ENCODE measurements at regions of chr12 and their contacts with region 1.

Region 1: DNA sequence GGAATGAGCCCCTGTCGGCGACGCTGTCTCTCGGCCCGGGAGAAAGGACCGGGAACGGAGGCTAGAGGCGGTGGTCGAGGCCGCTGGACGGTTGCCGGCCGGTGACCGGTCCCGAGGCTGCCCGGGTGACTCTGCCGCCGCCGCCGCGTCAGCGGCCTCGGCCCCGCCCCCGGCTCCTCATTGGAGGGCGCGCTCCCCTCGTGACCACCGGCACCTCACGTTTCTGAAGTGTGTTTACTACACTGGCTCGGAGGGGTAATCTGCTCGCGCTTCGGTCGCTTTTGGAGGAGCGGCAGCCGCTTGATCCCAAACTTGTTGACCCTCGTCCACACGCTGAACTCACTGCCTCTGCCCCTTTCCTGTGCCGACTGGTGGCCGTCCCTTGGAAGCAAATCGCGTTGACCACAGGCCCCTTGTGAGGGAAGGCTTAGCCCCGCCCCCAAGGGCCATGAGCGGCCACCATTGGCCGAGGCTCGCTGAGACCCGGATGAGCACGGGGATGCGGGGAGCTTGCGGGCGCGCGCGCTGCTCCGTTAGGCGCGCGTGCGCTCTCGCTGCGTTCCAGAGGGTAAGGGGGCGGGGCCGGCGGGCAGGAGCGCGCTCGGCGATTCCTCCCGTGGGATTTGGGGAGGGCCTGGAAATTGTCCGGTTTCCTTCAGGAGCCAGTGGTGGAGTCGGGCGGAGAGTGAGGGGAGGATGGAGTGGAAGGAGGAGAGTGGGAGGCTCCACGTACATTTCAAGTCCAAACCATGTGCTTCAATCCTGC is at the start of gene CRY1:
- DNase-seq: peak; percentile 86 to 96 (median 91)
- ATAC-seq: peak; percentile 75
- H3K4me3 ChIP-seq: peak within 1 kb of the TSS; percentile 90
- H3K4me3 Mint-ChIP-seq: no peak within 1 kb of the TSS
- H3K27ac ChIP-seq: peak within 1 kb of the TSS; percentile 99
- H3K27ac Mint-ChIP-seq: no peak within 1 kb of the TSS
- H3K4me1 ChIP-seq: peaks cover 31% of the 10 kb centered on the region
- H3K4me1 Mint-ChIP-seq: peaks cover 17% of the 10 kb centered on the region
- H3K27me3 ChIP-seq: no peaks in the 10 kb centered on the region
- H3K27me3 Mint-ChIP-seq: peaks cover 10% of the 10 kb centered on the region
- CTCF ChIP-seq: no peak
- total RNA-seq, gene CRY1: 70.7 to 77.4 TPM

Region 2: DNA sequence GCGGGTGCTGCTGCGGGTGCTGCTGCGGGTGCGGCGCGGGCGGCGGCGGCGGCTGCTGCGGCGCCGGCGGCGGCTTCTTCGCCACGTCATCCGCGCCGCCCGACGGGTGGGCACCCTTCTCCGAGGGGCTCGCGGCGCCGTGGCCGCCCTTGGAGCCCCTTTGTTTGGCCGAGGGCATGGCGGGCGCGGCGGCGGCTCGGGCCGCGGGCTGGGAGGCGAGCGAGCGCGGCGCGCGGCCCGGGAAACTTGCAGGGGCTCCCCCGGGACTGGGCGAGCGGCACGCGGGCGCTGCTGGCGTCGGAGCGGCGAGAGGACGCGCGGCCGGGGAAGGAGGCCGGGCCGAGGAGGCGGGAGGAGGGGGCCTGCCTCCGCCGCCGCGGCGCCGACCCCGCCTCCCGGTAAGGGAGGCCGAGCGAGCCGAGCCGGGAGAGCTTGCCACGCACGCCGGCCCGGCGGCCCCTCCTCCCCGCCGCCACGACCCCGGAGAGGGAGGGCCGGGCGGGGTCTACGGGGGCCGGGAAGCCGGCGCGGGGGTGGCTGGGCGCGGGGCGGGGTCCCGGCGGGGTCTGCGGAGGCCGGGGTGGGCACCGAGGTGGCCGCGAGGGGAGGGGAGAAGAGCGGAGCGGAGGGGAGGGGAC is 845.8 kb before region 1 on chr12 and contains the start of gene CKAP4:
- CTCF ChIA-PET with region 1: no interaction called
- POLR2A ChIA-PET with region 1: no interaction called
- intact Hi-C with region 1: loop called in 1 of 2 experiments (anchors 10 kb)
- DNase-seq: peak; percentile 11 to 88 (median 54)
- ATAC-seq: peak; percentile 51
- H3K4me3 ChIP-seq: peak within 1 kb of the TSS; percentile 75
- H3K4me3 Mint-ChIP-seq: peak within 1 kb of the TSS; percentile 89
- H3K27ac ChIP-seq: peak within 1 kb of the TSS; percentile 81 to 89
- H3K27ac Mint-ChIP-seq: peak within 1 kb of the TSS; percentile 94
- H3K4me1 ChIP-seq: peaks cover 37% of the 10 kb centered on the region
- H3K4me1 Mint-ChIP-seq: peaks cover 43% of the 10 kb centered on the region
- H3K27me3 ChIP-seq: no peaks in the 10 kb centered on the region
- H3K27me3 Mint-ChIP-seq: no peaks in the 10 kb centered on the region
- CTCF ChIP-seq: no peak
- total RNA-seq, gene CKAP4: 14.7 to 15.7 TPM

Region 3: DNA sequence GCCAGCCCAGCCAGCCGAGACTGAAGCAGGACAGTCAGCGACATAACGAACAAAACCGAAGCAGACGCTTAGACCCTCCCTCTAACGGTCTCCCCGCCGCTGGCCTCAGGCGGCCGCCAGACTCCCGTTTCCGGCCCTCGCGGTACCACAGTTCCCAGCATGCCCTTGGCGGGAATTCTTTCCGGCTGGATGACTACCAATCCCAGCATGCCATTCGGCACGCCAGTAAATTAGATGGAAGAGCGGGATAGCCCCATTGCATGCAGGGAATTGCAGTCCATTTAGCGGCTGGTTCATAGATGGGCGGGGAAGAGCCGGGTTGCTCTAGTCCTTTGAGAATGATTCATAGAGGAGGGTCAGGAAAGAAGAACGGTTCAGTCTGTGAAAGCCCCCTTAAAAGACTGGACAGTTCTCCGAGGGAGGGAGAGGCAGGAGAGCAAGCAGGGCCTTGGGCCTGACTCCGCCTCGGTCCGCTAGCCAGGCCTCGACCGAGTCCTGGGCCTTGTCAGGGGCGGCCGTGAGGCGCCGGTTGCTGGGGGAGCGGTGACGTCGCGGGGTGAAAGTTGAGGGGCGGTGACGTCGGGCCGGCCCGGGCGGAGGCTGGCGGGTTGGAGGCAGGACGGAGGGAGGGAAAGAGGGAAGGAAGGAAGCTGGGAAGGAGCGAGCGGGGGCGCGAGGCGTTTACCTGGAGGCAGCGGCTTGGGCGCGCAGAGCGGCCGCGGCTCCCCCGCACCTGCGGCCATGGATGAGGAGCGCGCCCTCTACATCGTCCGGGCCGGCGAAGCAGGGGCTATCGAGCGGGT is 319.4 kb before region 1 on chr12 and contains the start of gene RIC8B:
- CTCF ChIA-PET with region 1: no interaction called
- POLR2A ChIA-PET with region 1: no interaction called
- intact Hi-C with region 1: loop called in 1 of 2 experiments (anchors 5 kb)
- DNase-seq: peak; percentile 51 to 91 (median 72)
- ATAC-seq: peak; percentile 82
- H3K4me3 ChIP-seq: peak within 1 kb of the TSS; percentile 89
- H3K4me3 Mint-ChIP-seq: peak within 1 kb of the TSS; percentile 98
- H3K27ac ChIP-seq: peak within 1 kb of the TSS; percentile 80 to 90
- H3K27ac Mint-ChIP-seq: peak within 1 kb of the TSS; percentile 97
- H3K4me1 ChIP-seq: peaks cover 31% of the 10 kb centered on the region
- H3K4me1 Mint-ChIP-seq: peaks cover 42% of the 10 kb centered on the region
- H3K27me3 ChIP-seq: no peaks in the 10 kb centered on the region
- H3K27me3 Mint-ChIP-seq: no peaks in the 10 kb centered on the region
- CTCF ChIP-seq: no peak
- total RNA-seq, gene RIC8B: 5.5 to 9.0 TPM

Region 4: GRCh38 chr12:107014028-107014427 is 79.6 kb before region 1 on chr12:
- CTCF ChIA-PET with region 1: interaction called, 6 read pairs
- POLR2A ChIA-PET with region 1: interaction called, 4 read pairs
- intact Hi-C with region 1: loop called in 1 of 2 experiments (anchors 2 kb)
- DNase-seq: peak in 4 of 14 experiments; percentile 27 to 70 (median 56)
- ATAC-seq: peak; percentile 91
- H3K4me3 ChIP-seq: no peak overlapping the region
- H3K4me3 Mint-ChIP-seq: no peak overlapping the region
- H3K27ac ChIP-seq: no peak overlapping the region
- H3K27ac Mint-ChIP-seq: no peak overlapping the region
- H3K4me1 ChIP-seq: no peaks in the 10 kb centered on the region
- H3K4me1 Mint-ChIP-seq: no peaks in the 10 kb centered on the region
- H3K27me3 ChIP-seq: no peaks in the 10 kb centered on the region
- H3K27me3 Mint-ChIP-seq: no peaks in the 10 kb centered on the region
- CTCF ChIP-seq: no peak

Region 5: DNA sequence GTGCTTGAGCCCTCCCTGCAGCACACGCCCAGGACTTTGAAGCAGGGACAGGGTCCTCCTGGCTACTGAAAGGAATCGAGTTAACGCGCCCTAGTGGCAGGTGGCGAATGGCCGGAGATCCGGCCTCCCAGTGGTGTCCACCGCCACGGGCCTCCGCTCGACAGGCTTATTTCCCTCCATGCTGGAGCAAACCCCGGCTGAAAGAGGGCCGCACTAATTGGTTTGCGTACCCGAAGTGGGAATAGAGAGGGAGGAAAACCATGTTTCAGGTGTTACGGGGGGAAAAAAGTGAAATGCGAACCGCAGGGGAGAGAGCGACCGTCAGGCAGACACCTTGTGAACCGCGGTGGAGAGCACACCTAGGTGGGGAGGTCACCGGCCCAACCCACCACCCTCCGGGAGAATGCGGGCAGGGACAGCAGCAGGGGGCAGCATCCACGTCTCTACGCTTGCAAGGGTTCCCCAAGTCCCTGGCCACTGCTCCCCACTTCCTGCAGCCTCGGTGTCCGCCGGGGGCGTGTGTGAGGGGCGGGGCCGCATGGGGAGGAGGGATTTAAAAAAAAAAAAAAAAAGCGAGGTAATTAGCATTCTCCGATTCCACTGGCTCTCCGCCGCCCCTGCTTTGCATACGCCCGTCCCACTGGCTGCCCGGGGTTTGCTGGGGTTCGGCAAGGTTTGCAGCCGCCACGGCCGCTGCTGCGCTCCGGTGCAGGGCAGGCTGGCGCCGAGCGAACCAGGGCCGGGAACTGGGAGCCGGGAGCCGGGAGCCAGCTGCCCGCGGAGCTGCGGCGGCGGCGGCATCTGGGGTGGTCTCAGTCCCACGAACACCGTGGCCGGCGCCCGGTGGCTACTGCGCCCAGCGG is 224.4 kb after region 1 on chr12:
- CTCF ChIA-PET with region 1: no interaction called
- POLR2A ChIA-PET with region 1: interaction called, 24 read pairs
- intact Hi-C with region 1: loop called (anchors 1 to 5 kb)
- DNase-seq: peak; percentile 69 to 94 (median 84)
- ATAC-seq: peak; percentile 56
- H3K4me3 ChIP-seq: peak overlapping the region; percentile 95
- H3K4me3 Mint-ChIP-seq: peak overlapping the region; percentile 88
- H3K27ac ChIP-seq: peak overlapping the region in 1 of 2 donors; percentile 29
- H3K27ac Mint-ChIP-seq: peak overlapping the region; percentile 78
- H3K4me1 ChIP-seq: peaks cover 38% of the 10 kb centered on the region
- H3K4me1 Mint-ChIP-seq: peaks cover 36% of the 10 kb centered on the region
- H3K27me3 ChIP-seq: no peaks in the 10 kb centered on the region
- H3K27me3 Mint-ChIP-seq: no peaks in the 10 kb centered on the region
- CTCF ChIP-seq: peak; percentile 34

Region 6: DNA sequence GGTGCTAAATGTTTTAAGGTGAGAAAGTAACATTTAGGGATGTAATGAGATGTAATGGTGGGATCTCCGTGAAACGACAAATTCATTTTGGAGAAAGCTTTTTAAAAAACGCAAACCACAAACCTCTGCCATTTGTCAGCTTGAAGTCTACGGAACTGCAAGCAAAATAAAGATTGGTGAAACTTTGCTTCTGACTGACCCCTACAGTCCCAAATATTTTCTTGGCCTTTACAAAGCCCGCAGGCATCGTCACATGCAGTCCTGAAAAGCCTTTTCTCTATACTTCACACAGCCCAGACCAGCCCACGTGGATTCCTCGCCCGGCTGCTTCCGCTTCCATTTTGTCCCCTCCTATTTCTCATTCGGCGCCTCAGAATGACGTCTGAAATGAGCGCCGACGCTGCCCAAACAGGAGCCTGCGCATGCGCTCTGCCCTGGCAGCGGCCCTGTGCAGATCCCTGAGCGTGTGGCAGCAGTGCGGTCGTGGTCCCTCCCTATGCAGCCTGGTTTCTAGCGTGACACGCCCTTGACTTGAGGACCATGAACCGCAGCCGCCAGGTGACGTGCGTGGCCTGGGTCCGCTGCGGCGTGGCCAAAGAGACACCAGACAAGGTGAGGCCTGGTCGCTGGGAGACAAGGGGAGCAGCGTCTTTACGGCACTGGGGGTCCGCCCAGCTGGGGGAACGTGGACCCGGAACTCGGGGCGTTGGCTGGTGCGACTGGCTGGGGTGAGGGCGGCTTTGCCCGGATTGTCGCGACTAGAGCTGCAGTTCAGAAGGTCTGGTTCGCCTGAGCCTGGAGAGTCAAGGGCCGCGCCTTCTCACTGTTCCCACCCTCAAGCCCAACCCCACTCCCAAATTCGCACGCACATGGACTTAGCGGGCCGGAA is 592.0 kb after region 1 on chr12 and contains the start of gene PWP1:
- CTCF ChIA-PET with region 1: no interaction called
- POLR2A ChIA-PET with region 1: no interaction called
- intact Hi-C with region 1: loop called in 1 of 2 experiments (anchors 2 kb)
- DNase-seq: peak; percentile 91 to 99 (median 94)
- ATAC-seq: peak; percentile 90
- H3K4me3 ChIP-seq: peak within 1 kb of the TSS; percentile 99
- H3K4me3 Mint-ChIP-seq: peak within 1 kb of the TSS; percentile 97
- H3K27ac ChIP-seq: peak within 1 kb of the TSS; percentile 75 to 91
- H3K27ac Mint-ChIP-seq: peak within 1 kb of the TSS; percentile 94
- H3K4me1 ChIP-seq: peaks cover 24% of the 10 kb centered on the region
- H3K4me1 Mint-ChIP-seq: peaks cover 33% of the 10 kb centered on the region
- H3K27me3 ChIP-seq: no peaks in the 10 kb centered on the region
- H3K27me3 Mint-ChIP-seq: no peaks in the 10 kb centered on the region
- CTCF ChIP-seq: no peak
- total RNA-seq, gene PWP1: 24.1 to 24.2 TPM

Measured in CD4-positive, alpha-beta T cell (primary cell).